ENCODE measurements at regions of chr3 and their contacts with region 1.

Region 1: DNA sequence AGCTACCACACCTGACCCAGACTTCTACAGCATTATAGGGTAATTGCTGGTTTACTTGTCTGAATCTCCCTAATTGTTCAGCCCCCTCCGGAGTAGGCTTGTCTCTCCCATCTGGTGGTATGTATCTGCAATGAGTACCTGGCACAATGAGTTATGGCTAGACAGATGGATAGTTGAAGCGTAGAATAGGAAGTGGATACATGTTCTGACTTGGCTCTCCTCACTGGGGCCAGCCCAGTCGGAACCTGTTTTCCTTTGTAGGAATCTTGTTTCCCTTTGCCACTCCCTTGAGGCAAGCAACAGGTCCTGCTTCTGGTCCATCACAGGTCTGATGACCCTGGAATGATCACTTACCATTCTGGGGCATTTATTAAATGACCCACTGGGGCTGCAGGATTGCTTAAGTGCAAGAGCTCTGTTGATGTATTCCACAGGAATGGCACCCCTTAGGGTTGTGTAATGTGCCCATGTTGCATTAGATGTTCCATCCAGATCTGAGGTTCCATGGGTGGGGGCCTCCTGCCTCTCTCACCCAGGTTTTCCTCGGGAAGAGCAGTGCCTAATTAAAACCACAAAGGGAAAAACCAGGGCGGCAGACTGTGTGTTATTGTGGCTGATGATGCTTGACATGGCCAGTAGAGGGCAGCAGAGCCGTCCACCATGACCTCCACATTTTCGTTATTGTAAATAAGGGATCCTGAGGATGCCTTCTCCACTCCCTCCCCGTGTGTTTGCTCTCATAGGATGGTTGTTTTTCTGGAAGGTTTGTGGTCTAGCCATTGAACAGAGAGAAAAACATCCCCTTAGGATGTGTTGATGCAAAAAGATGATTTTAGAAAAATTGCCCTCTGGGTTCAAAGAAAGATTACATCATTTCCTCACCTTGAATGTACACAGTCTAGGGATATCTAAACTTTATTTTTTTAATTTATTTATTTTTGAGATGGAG is 58.0 kb downstream of the CMTM8 start:
- DNase-seq: peak; percentile 61 to 73 (median 68)
- H3K4me3 ChIP-seq: no peak overlapping the region
- H3K4me3 Mint-ChIP-seq: peak overlapping the region; percentile 49 to 86 (median 71)
- H3K27ac ChIP-seq: peak overlapping the region; percentile 63
- H3K27ac Mint-ChIP-seq: peak overlapping the region; percentile 81 to 97 (median 93)
- H3K4me1 ChIP-seq: peaks cover 52% of the 10 kb centered on the region
- H3K4me1 Mint-ChIP-seq: peaks cover 34 to 65% (median 48%) of the 10 kb centered on the region in 4 donors
- H3K27me3 ChIP-seq: no peaks in the 10 kb centered on the region
- H3K27me3 Mint-ChIP-seq: no peaks in the 10 kb centered on the region

Region 2: DNA sequence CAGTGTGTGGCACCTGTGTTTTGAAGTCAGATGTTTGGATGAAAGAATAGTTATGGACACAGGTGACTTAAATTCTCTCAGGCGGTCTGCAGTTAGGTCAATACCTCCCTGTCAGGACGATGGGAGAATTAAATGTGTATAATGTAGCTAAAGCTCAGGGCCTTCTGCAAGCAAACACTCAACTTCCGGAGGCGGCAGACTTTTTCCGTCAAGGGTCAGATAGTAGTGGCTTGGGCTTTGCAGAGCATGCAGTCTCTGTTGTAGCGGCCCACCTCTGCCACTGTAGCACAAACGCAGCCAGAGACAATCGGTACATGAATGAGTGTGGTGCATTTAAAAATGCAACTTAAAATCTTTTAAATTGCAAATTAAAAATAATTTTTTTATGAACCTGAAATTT is 10.6 kb before region 1 on chr3:
- CTCF ChIA-PET with region 1: interaction called, 36 read pairs
- POLR2A ChIA-PET with region 1: interaction called, 4 read pairs
- intact Hi-C with region 1: no loop called
- DNase-seq: peak in 1 of 5 donors; percentile 46
- H3K4me3 ChIP-seq: no peak overlapping the region
- H3K4me3 Mint-ChIP-seq: peak overlapping the region in 7 of 8 donors; percentile 6 to 74 (median 59)
- H3K27ac ChIP-seq: peak overlapping the region; percentile 31
- H3K27ac Mint-ChIP-seq: peak overlapping the region; percentile 68 to 90 (median 83)
- H3K4me1 ChIP-seq: peaks cover 53% of the 10 kb centered on the region
- H3K4me1 Mint-ChIP-seq: peaks cover 30 to 62% (median 43%) of the 10 kb centered on the region in 4 donors
- H3K27me3 ChIP-seq: no peaks in the 10 kb centered on the region
- H3K27me3 Mint-ChIP-seq: no peaks in the 10 kb centered on the region

Region 3: GRCh38 chr3:32334675-32335074 is 38.1 kb after region 1 on chr3:
- CTCF ChIA-PET with region 1: interaction called, 382 read pairs
- POLR2A ChIA-PET with region 1: interaction called, 81 read pairs
- intact Hi-C with region 1: loop called (anchors 1 kb)
- DNase-seq: peak; percentile 54 to 63 (median 58)
- H3K4me3 ChIP-seq: no peak overlapping the region
- H3K4me3 Mint-ChIP-seq: peak overlapping the region in 7 of 8 donors; percentile 32 to 74 (median 55)
- H3K27ac ChIP-seq: peak overlapping the region; percentile 24
- H3K27ac Mint-ChIP-seq: peak overlapping the region; percentile 7 to 84 (median 75)
- H3K4me1 ChIP-seq: peaks cover 45% of the 10 kb centered on the region
- H3K4me1 Mint-ChIP-seq: peaks cover 39 to 60% (median 52%) of the 10 kb centered on the region in 4 donors
- H3K27me3 ChIP-seq: no peaks in the 10 kb centered on the region
- H3K27me3 Mint-ChIP-seq: no peaks in the 10 kb centered on the region

Region 4: DNA sequence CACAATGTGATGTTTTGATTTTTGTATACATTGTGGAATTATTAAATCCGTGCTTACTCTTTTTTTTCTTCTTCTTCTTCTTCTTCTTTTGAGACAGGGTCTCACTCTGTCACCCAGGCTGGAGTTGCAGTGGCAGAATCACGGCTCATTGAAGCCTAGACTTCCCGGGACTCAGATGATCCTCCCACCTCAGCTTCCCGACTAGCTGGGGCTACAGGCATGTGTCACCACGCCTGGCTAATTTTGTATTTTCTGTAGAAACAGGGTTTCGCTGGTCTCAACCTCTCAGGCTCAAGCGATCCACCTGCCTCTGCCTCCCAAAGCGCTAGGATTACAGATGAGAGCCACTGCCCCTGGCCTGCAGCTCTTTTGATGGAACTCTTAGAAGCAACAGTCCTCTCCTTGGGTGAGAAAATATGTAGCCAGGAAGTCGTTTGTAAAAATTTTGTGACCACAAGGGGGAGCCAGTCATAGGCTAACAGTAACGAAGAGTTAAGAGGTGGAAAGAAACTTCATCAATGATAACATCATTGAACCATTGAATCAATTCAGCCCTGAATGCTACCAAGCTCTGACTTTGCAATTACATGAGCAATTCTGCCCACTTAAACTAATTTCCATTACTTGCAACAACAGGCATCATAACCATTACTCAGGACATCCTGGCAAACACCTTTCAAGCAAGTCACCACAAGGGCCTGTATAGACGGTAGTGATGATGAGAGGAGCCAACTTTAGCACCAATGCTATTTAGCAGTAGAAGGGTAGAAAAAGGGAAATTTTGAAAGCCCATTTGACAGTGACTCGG is 78.5 kb after region 1 on chr3:
- CTCF ChIA-PET with region 1: interaction called, 27 read pairs
- POLR2A ChIA-PET with region 1: interaction called, 7 read pairs
- intact Hi-C with region 1: loop called (anchors 1 kb)
- DNase-seq: peak; percentile 74 to 78 (median 78)
- H3K4me3 ChIP-seq: no peak overlapping the region
- H3K4me3 Mint-ChIP-seq: peak overlapping the region in 1 of 8 donors; percentile 21
- H3K27ac ChIP-seq: no peak overlapping the region
- H3K27ac Mint-ChIP-seq: peak overlapping the region in 5 of 7 donors; percentile 18 to 70 (median 33)
- H3K4me1 ChIP-seq: peaks cover 21% of the 10 kb centered on the region
- H3K4me1 Mint-ChIP-seq: peaks cover 18 to 28% (median 24%) of the 10 kb centered on the region in 4 donors
- H3K27me3 ChIP-seq: no peaks in the 10 kb centered on the region
- H3K27me3 Mint-ChIP-seq: no peaks in the 10 kb centered on the region

Region 5: DNA sequence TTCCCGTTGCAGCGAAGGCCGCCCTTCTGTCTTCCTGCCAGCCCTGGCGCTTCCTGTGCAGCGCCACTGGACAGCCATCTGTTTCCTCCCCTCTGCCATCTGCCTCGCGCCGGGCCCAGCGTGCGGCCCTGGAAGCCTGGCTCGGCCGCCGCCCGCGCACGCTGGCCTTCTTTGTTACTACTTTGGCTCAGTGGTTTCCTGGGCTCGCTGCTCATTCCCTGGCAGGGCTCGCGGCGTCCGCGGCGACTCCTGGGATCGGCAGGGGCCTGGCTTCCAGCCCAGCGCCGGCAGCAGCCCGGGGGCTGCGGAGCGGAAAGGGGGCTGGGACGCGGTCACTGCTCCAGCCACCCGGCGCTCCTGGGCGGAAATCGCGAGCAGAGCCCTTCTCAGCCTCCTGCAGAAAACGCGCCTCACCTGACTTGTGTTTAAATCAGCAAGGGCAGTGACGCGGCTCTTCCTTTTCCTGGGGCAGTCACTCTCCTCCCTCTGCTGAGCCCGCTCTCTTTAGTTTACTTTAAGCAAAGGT is 105.1 kb after region 1 on chr3:
- CTCF ChIA-PET with region 1: interaction called, 14 read pairs
- POLR2A ChIA-PET with region 1: interaction called, 5 read pairs
- intact Hi-C with region 1: loop called (anchors 1 kb)
- DNase-seq: peak; percentile 60 to 75 (median 67)
- H3K4me3 ChIP-seq: peak overlapping the region; percentile 61 to 68
- H3K4me3 Mint-ChIP-seq: peak overlapping the region; percentile 87 to 95 (median 94)
- H3K27ac ChIP-seq: peak overlapping the region; percentile 84
- H3K27ac Mint-ChIP-seq: peak overlapping the region; percentile 95 to 100 (median 99)
- H3K4me1 ChIP-seq: peaks cover 72% of the 10 kb centered on the region
- H3K4me1 Mint-ChIP-seq: peaks cover 53 to 84% (median 69%) of the 10 kb centered on the region in 4 donors
- H3K27me3 ChIP-seq: no peaks in the 10 kb centered on the region
- H3K27me3 Mint-ChIP-seq: no peaks in the 10 kb centered on the region